Aorta (tissue), 5 donors: ENCODE measurements at regions of chr12 and their contacts with region 1.

Region 1: GRCh38 chr12:39764944-39765560 is 145.4 kb upstream of the ABCD2 start:
- DNase-seq: no peak
- ATAC-seq: no peak
- H3K4me3 ChIP-seq: no peak overlapping the region
- H3K27ac ChIP-seq: no peak overlapping the region
- H3K4me1 ChIP-seq: no peaks in the 10 kb centered on the region
- H3K27me3 ChIP-seq: no peaks in the 10 kb centered on the region

Region 2: GRCh38 chr12:39835517-39836489 is 70.8 kb after region 1 on chr12:
- intact Hi-C with region 1: no loop called
- DNase-seq: no peak
- ATAC-seq: no peak
- H3K4me3 ChIP-seq: no peak overlapping the region
- H3K27ac ChIP-seq: no peak overlapping the region
- H3K4me1 ChIP-seq: no peaks in the 10 kb centered on the region
- H3K27me3 ChIP-seq: no peaks in the 10 kb centered on the region

Region 3: DNA sequence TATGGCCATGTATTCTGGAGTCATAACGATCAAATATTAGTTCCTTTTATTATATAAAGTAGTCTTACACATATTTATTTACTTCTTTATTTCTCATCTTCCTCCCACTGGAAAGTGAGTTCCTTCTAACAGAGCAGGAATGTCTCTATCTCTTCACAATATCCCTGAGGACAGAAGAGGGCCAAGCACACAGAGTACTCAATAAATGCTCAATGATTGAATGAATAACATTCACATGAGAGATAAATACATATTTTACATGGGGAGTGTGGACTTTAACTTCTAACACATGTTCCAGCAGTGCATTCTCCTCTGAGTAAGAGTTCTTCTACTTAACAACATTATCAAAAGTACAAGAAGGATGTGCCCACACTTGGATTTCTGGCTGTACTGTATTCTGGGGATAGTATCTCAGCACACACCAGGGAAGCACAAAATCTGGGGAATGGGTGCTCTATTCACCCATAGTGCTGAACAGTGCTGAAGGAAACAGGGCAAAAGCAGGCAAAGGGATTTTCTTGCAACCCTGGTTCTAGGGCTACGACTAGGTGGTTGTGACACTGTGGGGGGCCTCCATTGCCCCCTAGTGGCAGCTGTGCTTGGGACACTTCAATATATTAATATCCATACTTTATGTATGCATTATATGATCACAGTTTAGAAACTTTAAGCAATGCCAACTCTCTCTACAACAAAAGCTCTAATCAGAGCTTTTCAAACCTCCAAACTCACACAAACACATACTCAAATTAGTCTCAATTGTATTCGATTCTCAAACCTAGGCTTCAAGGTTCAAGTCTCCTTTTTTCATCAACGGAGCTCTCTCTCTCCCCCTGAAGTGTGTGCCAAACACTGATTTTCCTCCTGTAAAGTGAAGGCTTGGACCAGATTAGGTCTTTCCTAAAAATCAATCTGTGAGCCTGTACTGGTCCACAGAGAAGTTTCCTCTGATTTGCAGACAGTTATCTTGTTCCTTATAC is 225.4 kb after region 1 on chr12:
- intact Hi-C with region 1: loop called in 1 of 2 experiments (anchors 5 kb)
- DNase-seq: peak; percentile 53 to 80
- ATAC-seq: peak; percentile 78
- H3K4me3 ChIP-seq: no peak overlapping the region
- H3K27ac ChIP-seq: no peak overlapping the region
- H3K4me1 ChIP-seq: peaks cover 0 to 3% of the 10 kb centered on the region in 2 donors
- H3K27me3 ChIP-seq: no peaks in the 10 kb centered on the region

Region 4: GRCh38 chr12:40107098-40107802 is 342.2 kb after region 1 on chr12:
- intact Hi-C with region 1: loop called in 1 of 2 experiments (anchors 5 kb)
- DNase-seq: peak; percentile 90 to 97
- ATAC-seq: peak; percentile 84
- H3K4me3 ChIP-seq: peak overlapping the region; percentile 70 to 81
- H3K27ac ChIP-seq: no peak overlapping the region
- H3K4me1 ChIP-seq: peaks cover 0 to 6% of the 10 kb centered on the region in 2 donors
- H3K27me3 ChIP-seq: no peaks in the 10 kb centered on the region

Region 5: DNA sequence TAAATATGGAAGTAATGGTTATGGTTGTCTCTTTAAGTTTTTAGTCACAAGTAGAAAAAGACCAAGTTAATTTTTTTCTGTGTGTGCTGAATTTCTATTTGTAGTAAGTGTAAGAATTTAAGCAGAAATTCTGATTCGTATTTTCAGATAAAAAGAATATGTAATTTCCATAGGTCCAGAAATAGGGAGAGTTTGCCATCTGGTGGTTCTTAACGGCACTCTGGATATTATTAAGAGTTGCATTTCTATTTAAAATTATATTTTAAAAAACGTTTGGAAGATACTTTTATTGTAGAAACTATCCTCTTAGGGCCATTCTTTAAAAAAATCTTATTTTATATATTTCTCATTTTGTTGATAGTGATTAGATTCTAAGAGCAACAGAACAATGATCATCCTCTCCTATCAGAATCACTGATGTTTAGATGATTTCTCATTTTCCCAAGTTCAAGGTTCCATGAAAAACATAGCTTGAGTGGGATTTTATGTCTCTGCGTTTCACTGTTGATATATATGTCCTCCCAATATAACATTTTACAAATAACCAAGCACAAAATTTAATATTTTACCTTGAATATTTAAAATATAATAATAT is 548.0 kb after region 1 on chr12:
- intact Hi-C with region 1: no loop called
- DNase-seq: no peak
- ATAC-seq: no peak
- H3K4me3 ChIP-seq: no peak overlapping the region
- H3K27ac ChIP-seq: no peak overlapping the region
- H3K4me1 ChIP-seq: no peaks in the 10 kb centered on the region
- H3K27me3 ChIP-seq: no peaks in the 10 kb centered on the region